Pancreas (tissue), 10 donors: ENCODE measurements at regions of chr6 and their contacts with region 1.

Region 1: DNA sequence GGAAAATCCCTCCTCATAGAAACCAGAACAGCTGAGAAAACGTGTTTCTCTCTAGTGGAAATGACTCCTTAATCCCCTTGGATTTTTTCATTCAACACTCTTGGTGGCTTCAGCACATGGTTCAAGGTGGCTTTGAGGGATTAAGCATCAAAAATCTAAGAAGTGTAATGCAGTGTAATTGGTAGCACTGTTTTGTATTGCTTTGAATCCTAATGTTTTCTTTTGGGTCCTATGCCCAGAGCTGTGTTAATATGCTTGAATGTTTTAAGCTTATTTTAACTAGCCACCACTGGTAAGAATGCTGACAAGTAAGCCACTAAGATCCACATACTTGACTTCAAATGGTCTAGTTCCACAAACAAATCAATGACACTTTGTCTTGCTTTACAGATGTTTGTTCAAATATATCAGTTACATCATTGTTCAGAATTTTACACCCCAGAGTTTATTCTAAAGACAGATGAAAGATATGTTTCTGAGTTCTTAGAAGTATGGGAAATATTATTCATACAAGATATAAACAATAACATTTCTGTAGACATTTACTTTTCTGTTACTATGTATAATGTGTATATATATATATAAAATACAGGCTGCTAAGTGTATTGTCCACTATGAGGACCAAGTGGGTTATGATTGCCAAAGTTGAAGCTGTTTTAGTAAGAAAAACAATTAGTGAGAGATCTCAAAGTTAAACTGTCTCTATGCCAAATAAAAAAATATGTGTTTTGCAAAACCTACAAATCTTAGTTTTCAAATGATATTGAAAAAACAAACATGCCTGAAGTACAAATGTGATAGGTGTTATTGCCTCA is 220.8 kb downstream of the OGFRL1 start:
- DNase-seq: no peak
- ATAC-seq: no peak
- H3K4me3 ChIP-seq: no peak overlapping the region
- H3K27ac ChIP-seq: no peak overlapping the region
- H3K4me1 ChIP-seq: no peaks in the 10 kb centered on the region
- H3K27me3 ChIP-seq: no peaks in the 10 kb centered on the region
- CTCF ChIP-seq: no peak

Region 2: GRCh38 chr6:71190809-71191208 is 318.6 kb before region 1 on chr6:
- intact Hi-C with region 1: no loop called
- DNase-seq: no peak
- ATAC-seq: no peak
- H3K4me3 ChIP-seq: no peak overlapping the region
- H3K27ac ChIP-seq: no peak overlapping the region
- H3K4me1 ChIP-seq: no peaks in the 10 kb centered on the region
- H3K27me3 ChIP-seq: no peaks in the 10 kb centered on the region
- CTCF ChIP-seq: peak in 1 of 4 donors; percentile 8

Region 3: GRCh38 chr6:71383901-71384489 is 125.4 kb before region 1 on chr6:
- intact Hi-C with region 1: loop called in 2 of 3 experiments (anchors 10 kb)
- DNase-seq: no peak
- ATAC-seq: peak in 3 of 4 donors; percentile 56 to 73 (median 72)
- H3K4me3 ChIP-seq: no peak overlapping the region
- H3K27ac ChIP-seq: no peak overlapping the region
- H3K4me1 ChIP-seq: peaks cover 0 to 21% (median 4%) of the 10 kb centered on the region in 3 donors
- H3K27me3 ChIP-seq: no peaks in the 10 kb centered on the region
- CTCF ChIP-seq: peak; percentile 26 to 60 (median 36)